PC-9 (cell line): ENCODE measurements at regions of chr3 and their contacts with region 1.

Region 1: DNA sequence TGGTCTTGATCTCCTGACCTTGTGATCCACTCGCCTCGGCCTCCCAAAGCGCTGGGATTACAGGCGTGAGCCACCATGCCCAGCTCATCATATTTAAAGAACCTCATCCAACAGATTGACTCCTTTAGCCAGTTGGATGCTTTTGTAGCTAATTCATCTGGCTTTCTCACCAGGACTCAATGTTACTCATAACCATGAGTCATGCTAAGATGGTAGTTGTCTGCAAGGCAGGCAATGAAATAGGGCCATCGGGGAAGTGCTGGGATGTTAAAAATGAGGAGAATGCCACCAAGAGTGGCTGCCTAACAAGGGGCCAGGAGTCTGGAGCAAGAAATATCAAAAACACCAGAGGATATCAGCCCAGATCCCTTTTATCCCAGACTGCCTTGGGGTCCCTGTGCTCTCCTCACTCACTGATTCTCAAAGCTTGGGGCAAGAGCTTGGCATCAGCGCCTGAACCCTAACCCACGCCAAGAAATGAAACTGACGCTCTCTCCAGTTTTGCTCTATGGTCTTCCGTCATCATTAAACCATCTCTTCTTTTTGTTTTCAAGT is 7.4 kb upstream of the PCOLCE2 start:
- DNase-seq: peak in 1 of 2 experiments; percentile 68
- H3K4me3 ChIP-seq: no peak overlapping the region
- H3K27ac ChIP-seq: peak overlapping the region; percentile 40
- H3K4me1 ChIP-seq: peaks cover 18% of the 10 kb centered on the region
- H3K27me3 ChIP-seq: no peaks in the 10 kb centered on the region
- CTCF ChIP-seq: no peak

Region 2: GRCh38 chr3:142844339-142844977 is 51.8 kb before region 1 on chr3:
- CTCF ChIA-PET with region 1: no interaction called
- POLR2A ChIA-PET with region 1: no interaction called
- intact Hi-C with region 1: loop called (anchors 5 kb)
- DNase-seq: peak in 1 of 2 experiments; percentile 42
- H3K4me3 ChIP-seq: no peak overlapping the region
- H3K27ac ChIP-seq: no peak overlapping the region
- H3K4me1 ChIP-seq: peaks cover 5% of the 10 kb centered on the region
- H3K27me3 ChIP-seq: no peaks in the 10 kb centered on the region
- CTCF ChIP-seq: peak; percentile 62

Region 3: GRCh38 chr3:143002083-143002712 is 105.9 kb after region 1 on chr3:
- CTCF ChIA-PET with region 1: no interaction called
- POLR2A ChIA-PET with region 1: no interaction called
- intact Hi-C with region 1: no loop called
- DNase-seq: no peak
- H3K4me3 ChIP-seq: peak overlapping the region; percentile 93
- H3K27ac ChIP-seq: peak overlapping the region; percentile 96
- H3K4me1 ChIP-seq: peaks cover 40% of the 10 kb centered on the region
- H3K27me3 ChIP-seq: no peaks in the 10 kb centered on the region
- CTCF ChIP-seq: no peak